Activated naive CD4-positive, alpha-beta T cell treated with anti-CD3 and anti-CD28 coated beads, Interleukin-2, amount 10 ng/mL, durations not matched to agents 7 days and 5 days (primary cell): ENCODE measurements at regions of chr17 and their contacts with region 1.

Region 1: DNA sequence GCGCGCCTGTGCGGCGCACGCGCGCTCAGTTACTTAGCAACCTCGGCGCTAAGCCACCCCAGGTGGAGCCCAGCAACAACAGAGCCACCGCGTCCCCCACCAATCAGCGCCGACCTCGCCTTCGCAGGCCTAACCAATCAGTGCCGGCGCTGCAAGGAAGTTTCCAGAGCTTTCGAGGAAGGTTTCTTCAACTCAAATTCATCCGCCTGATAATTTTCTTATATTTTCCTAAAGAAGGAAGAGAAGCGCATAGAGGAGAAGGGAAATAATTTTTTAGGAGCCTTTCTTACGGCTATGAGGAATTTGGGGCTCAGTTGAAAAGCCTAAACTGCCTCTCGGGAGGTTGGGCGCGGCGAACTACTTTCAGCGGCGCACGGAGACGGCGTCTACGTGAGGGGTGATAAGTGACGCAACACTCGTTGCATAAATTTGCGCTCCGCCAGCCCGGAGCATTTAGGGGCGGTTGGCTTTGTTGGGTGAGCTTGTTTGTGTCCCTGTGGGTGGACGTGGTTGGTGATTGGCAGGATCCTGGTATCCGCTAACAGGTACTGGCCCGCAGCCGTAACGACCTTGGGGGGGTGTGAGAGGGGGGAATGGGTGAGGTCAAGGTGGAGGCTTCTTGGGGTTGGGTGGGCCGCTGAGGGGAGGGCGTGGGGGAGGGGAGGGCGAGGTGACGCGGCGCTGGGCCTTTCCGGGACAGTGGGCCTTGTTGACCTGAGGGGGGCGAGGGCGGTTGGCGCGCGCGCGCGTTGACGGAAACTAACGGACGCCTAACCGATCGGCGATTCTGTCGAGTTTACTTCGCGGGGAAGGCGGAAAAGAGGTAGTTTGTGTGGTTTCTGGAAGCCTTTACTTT is at the start of gene UBB:
- DNase-seq: peak; percentile 97
- H3K4me3 Mint-ChIP-seq: peak within 1 kb of the TSS; percentile 89
- H3K27ac Mint-ChIP-seq: peak within 1 kb of the TSS; percentile 93
- H3K4me1 Mint-ChIP-seq: peaks cover 40% of the 10 kb centered on the region
- H3K27me3 Mint-ChIP-seq: peaks cover 13% of the 10 kb centered on the region

Region 2: DNA sequence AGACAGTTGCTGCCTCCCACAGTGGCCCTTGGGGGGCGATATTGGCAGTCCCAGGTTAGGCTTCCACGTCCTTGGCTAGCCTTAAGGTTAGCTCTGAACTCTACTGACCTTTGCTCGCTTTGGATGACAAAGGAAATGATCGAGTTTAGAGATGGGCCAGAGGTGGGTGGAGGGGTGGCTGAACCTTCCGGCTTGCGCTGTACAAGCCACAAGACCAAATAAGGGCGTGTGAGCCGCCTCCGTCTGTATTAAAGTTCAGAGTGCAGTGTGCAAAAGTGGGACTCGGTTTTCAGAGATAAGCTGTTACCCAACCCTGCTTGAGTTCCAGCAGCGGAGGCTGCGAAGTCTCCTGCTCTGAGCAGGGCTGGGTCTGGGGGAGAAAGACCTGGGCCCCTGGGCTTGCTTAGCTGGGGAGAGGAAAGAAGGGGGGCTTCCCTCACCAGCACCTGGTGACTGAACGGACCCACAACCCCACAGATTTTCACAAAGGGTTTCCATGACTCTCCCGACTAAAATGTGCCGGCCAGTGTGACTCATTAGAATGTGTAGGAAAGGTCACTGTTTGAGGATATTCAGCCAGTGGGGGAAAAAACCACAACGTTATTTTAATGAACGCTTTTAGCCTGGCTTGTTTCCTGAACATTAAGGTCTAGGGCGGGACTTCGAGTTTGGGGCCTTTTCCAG is 94.8 kb before region 1 on chr17:
- CTCF ChIA-PET with region 1: no interaction called
- DNase-seq: peak; percentile 87
- H3K4me3 Mint-ChIP-seq: peak overlapping the region; percentile 66
- H3K27ac Mint-ChIP-seq: peak overlapping the region; percentile 98
- H3K4me1 Mint-ChIP-seq: peaks cover 55% of the 10 kb centered on the region
- H3K27me3 Mint-ChIP-seq: no peaks in the 10 kb centered on the region

Region 3: DNA sequence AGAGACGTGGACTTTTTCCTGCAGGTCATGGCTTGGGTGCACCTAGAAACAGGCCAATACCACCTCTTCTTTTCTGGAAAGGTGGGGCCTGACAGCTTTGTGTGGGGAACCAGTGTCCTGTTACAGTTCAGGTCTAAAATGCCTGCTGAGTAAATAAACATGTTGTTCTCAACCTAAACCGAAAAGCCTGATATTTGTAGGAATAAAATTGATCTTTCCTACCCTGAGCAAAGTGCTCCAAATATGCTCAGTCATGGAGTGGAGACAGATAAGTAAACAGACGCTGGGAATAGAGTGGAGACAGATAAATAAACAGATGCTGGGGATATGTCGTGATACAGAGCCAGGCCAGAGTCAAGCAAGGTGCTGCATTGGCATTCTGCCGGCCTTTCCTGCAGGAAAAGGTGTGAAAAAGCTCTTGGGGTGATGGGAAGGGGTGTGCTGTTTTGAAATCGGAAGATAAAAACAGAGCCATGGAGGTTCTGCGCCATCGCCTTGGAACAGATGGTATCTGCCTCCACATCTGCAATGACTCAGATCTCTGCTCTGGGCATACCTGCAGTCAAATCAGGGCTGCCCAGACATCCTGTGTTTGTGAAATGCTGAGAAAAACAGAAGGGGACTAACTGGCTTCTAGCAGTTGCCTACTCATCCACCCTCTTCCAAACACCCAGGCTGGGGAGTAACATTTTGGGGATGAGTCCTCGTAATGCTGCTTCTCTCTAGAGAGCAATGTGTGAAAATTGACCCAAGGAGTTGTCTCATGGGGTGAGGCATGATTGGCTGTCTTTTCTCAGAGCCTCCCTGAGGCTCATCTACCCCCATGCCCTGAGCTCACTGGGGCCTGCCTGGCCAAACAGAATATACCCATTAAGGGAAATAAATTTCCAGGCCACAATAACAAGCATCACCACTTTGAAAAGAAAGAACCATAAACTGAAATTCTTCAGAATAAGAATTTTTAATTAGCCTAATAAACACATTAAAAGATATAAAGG is 17.7 kb after region 1 on chr17:
- CTCF ChIA-PET with region 1: no interaction called
- DNase-seq: peak; percentile 41
- H3K4me3 Mint-ChIP-seq: no peak overlapping the region
- H3K27ac Mint-ChIP-seq: peak overlapping the region; percentile 35
- H3K4me1 Mint-ChIP-seq: peaks cover 8% of the 10 kb centered on the region
- H3K27me3 Mint-ChIP-seq: peaks cover 23% of the 10 kb centered on the region

Region 4: DNA sequence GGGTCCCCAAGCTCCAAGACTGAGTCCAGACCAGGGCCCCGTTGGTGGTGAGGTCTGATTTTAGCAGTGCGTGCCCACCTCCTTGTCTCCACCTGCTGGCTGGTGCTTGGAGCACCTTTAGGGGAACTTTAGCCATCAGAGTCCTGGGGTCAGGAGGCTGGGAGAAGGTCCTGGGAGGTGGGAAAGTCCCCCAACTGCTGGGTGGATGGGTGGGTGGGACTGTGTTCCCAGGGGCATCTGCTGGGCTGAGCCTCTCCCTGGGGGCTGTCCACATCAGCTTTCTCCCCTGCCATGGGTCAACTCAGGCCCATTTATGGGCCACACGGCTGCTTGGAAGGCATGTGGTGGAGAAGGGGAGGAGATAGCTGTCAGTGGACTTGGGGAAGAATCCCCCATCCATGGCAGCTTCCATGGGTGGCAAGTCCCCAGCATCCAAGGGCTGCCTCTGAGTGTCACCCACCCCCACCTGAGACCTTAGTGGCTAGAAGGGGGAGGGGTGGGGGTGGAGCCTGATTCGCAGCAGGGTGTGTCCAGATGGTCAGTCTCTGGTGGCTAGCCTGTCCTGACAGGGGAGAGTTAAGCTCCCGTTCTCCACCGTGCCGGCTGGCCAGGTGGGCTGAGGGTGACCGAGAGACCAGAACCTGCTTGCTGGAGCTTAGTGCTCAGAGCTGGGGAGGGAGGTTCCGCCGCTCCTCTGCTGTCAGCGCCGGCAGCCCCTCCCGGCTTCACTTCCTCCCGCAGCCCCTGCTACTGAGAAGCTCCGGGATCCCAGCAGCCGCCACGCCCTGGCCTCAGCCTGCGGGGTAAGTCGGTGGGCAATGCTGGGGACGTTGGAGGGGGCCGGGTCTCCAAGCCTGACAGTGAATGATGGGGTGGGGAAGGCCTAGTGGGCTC is 34.4 kb after region 1 on chr17 and contains the start of gene TRPV2:
- CTCF ChIA-PET with region 1: interaction called, 18 read pairs
- DNase-seq: peak; percentile 73
- H3K4me3 Mint-ChIP-seq: peak within 1 kb of the TSS; percentile 94
- H3K27ac Mint-ChIP-seq: peak within 1 kb of the TSS; percentile 97
- H3K4me1 Mint-ChIP-seq: peaks cover 47% of the 10 kb centered on the region
- H3K27me3 Mint-ChIP-seq: no peaks in the 10 kb centered on the region